ENCODE measurements at regions of chr6 and their contacts with region 1.

Region 1: DNA sequence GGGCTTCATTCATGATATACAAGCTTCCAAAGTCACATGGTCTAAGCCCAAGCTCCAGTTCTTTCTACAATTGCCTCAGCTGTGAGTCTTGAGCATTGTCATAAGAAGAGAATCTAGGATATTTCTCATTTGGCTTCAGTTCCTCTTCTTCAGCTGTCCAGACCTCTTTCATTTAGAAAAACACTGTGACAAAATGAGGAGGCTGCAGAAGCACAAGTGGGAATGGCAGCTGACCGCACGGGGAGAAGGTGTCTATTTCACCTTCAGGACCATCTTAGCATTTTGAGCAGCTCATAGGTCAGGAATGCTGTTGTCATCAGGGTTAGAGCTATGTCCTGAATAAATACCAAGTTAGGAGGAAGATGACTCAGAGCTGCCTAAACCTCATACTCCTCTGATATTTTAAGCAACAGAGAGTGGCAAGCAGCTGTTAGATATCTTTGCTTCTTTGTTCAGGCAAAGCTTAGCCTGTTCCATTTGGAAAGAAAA is 390.1 kb upstream of the CITED2 start:
- DNase-seq: peak; percentile 99
- ATAC-seq: peak; percentile 94
- H3K4me3 ChIP-seq: no peak overlapping the region
- H3K27ac ChIP-seq: peak overlapping the region; percentile 29; the same call in 1 of the 2 replicates
- H3K4me1 ChIP-seq: peaks cover 13% of the 10 kb centered on the region
- H3K27me3 ChIP-seq: no peaks in the 10 kb centered on the region
- CTCF ChIP-seq: no peak
- POLR2A ChIP-seq: no peak
- RAD21 ChIP-seq: peak; percentile 17; the same call in 1 of the 2 replicates

Region 2: GRCh38 chr6:139644821-139645220 is 119.7 kb before region 1 on chr6:
- CTCF ChIA-PET with region 1: no interaction called
- POLR2A ChIA-PET with region 1: no interaction called
- dilution Hi-C with region 1: no loop called
- in situ Hi-C with region 1: no loop called
- intact Hi-C with region 1: no loop called
- DNase-seq: peak; percentile 30
- ATAC-seq: peak; percentile 54
- H3K4me3 ChIP-seq: no peak overlapping the region
- H3K27ac ChIP-seq: no peak overlapping the region
- H3K4me1 ChIP-seq: peaks cover 2% of the 10 kb centered on the region; the same call in 1 of the 2 replicates
- H3K27me3 ChIP-seq: no peaks in the 10 kb centered on the region
- CTCF ChIP-seq: no peak
- POLR2A ChIP-seq: no peak
- RAD21 ChIP-seq: no peak

Region 3: GRCh38 chr6:139981768-139982181 is 217.2 kb after region 1 on chr6:
- CTCF ChIA-PET with region 1: no interaction called
- POLR2A ChIA-PET with region 1: no interaction called
- dilution Hi-C with region 1: no loop called
- in situ Hi-C with region 1: no loop called
- intact Hi-C with region 1: loop called (anchors 5 kb)
- DNase-seq: peak; percentile 80
- ATAC-seq: peak; percentile 62
- H3K4me3 ChIP-seq: no peak overlapping the region
- H3K27ac ChIP-seq: peak overlapping the region; percentile 49; the same call in 1 of the 2 replicates
- H3K4me1 ChIP-seq: peaks cover 29% of the 10 kb centered on the region
- H3K27me3 ChIP-seq: no peaks in the 10 kb centered on the region
- CTCF ChIP-seq: no peak
- POLR2A ChIP-seq: no peak
- RAD21 ChIP-seq: no peak